ENCODE measurements at regions of chr19 and their contacts with region 1.

Region 1: GRCh38 chr19:10760273-10760944 is 42.5 kb downstream of the DNM2 start:
- DNase-seq: peak; percentile 43
- H3K4me3 Mint-ChIP-seq: peak overlapping the region; percentile 69
- H3K27ac Mint-ChIP-seq: peak overlapping the region; percentile 90
- H3K4me1 Mint-ChIP-seq: peaks cover 86% of the 10 kb centered on the region
- H3K27me3 Mint-ChIP-seq: no peaks in the 10 kb centered on the region

Region 2: GRCh38 chr19:10730923-10731322 is 29.5 kb before region 1 on chr19:
- CTCF ChIA-PET with region 1: interaction called, 6 read pairs
- POLR2A ChIA-PET with region 1: interaction called, 14 read pairs
- DNase-seq: no peak
- H3K4me3 Mint-ChIP-seq: no peak overlapping the region
- H3K27ac Mint-ChIP-seq: peak overlapping the region; percentile 82
- H3K4me1 Mint-ChIP-seq: peaks cover 52% of the 10 kb centered on the region
- H3K27me3 Mint-ChIP-seq: no peaks in the 10 kb centered on the region